ENCODE measurements at regions of chr22 and their contacts with region 1.

Region 1: GRCh38 chr22:32858116-32858703 is 56.7 kb downstream of the TIMP3 start:
- DNase-seq: no peak
- H3K4me3 ChIP-seq: no peak overlapping the region
- H3K27ac ChIP-seq: peak overlapping the region in 1 of 2 experiments; percentile 28; a peak in 1 of 4 replicates
- H3K4me1 ChIP-seq: peaks cover 0 to 26% of the 10 kb centered on the region in 2 experiments; a peak in 2 of 4 replicates
- H3K27me3 ChIP-seq: no peaks in the 10 kb centered on the region
- CTCF ChIP-seq: no peak
- EP300 ChIP-seq: no peak
- RAD21 ChIP-seq: no peak

Region 2: DNA sequence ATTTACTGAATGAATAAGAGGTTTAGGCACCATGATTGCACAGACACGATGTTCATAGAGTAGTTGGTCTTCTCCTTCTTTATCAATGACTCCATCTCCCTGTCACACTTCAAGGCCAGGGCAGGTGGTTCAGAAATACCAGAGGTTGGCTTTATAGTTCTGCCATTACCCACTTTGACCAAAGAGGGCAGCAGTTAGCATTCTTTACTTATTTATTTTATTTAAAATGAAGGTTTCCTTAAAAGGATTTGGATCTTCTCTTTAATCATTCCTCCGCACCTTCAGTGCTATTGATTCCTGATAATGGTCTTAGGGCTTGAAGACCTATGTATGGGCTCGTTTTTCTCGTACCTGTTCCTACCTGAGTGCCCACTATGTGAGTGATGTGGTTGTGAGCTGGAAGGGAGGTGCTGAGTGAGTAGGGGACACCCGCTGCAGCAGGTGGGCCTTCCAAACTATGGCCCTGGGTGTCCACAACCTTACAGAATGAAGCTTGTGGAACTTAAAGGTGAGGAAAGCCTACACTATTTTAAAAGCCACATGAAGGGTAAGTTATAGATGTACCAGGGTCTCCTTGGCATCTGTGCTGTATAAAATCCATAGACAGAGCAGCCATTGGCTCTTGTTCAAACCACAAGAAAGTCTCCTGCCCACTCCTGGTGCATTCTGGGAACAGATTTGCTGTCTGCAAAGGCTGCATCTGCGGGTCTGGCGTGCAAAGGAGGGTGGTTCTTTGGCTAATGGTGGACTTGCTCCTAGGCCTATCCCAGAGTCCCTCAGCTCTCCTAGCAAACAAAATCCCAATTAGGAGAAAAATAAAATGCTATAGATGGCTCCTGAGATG is 21.7 kb before region 1 on chr22:
- CTCF ChIA-PET with region 1: interaction called, 17 read pairs
- POLR2A ChIA-PET with region 1: no interaction called
- DNase-seq: peak; percentile 51
- H3K4me3 ChIP-seq: no peak overlapping the region
- H3K27ac ChIP-seq: no peak overlapping the region
- H3K4me1 ChIP-seq: peaks cover 0 to 21% of the 10 kb centered on the region in 2 experiments; a peak in 1 of 4 replicates
- H3K27me3 ChIP-seq: no peaks in the 10 kb centered on the region
- CTCF ChIP-seq: peak; percentile 68
- EP300 ChIP-seq: no peak
- RAD21 ChIP-seq: peak; percentile 43; the same call in 1 of the 2 replicates